ENCODE measurements at regions of chr1 and their contacts with region 1.

Region 1: GRCh38 chr1:159532922-159533321 is 2.9 kb downstream of the OR10J5 start:
- DNase-seq: no peak
- H3K4me3 ChIP-seq: no peak overlapping the region
- H3K27ac ChIP-seq: no peak overlapping the region
- H3K4me1 ChIP-seq: no peaks in the 10 kb centered on the region
- H3K27me3 ChIP-seq: peaks cover 38% of the 10 kb centered on the region
- CTCF ChIP-seq: no peak

Region 2: GRCh38 chr1:158809862-158810261 is 723.1 kb before region 1 on chr1:
- CTCF ChIA-PET with region 1: no interaction called
- POLR2A ChIA-PET with region 1: interaction called, 13 read pairs
- intact Hi-C with region 1: no loop called
- DNase-seq: no peak
- H3K4me3 ChIP-seq: no peak overlapping the region
- H3K27ac ChIP-seq: no peak overlapping the region
- H3K4me1 ChIP-seq: no peaks in the 10 kb centered on the region
- H3K27me3 ChIP-seq: peaks cover 5% of the 10 kb centered on the region
- CTCF ChIP-seq: no peak

Region 3: GRCh38 chr1:159509440-159510228 is 23.3 kb before region 1 on chr1:
- CTCF ChIA-PET with region 1: no interaction called
- POLR2A ChIA-PET with region 1: interaction called, 11 read pairs
- intact Hi-C with region 1: no loop called
- DNase-seq: no peak
- H3K4me3 ChIP-seq: no peak overlapping the region
- H3K27ac ChIP-seq: no peak overlapping the region
- H3K4me1 ChIP-seq: no peaks in the 10 kb centered on the region
- H3K27me3 ChIP-seq: peaks cover 4% of the 10 kb centered on the region
- CTCF ChIP-seq: no peak